ENCODE measurements at regions of chr19 and their contacts with region 1.

Region 1: GRCh38 chr19:45670670-45671453 is 2.8 kb downstream of the GIPR start:
- DNase-seq: peak; percentile 83
- H3K4me3 Mint-ChIP-seq: peak overlapping the region; percentile 57
- H3K27ac Mint-ChIP-seq: no peak overlapping the region
- H3K4me1 Mint-ChIP-seq: peaks cover 33% of the 10 kb centered on the region
- H3K27me3 Mint-ChIP-seq: peaks cover 17% of the 10 kb centered on the region

Region 2: DNA sequence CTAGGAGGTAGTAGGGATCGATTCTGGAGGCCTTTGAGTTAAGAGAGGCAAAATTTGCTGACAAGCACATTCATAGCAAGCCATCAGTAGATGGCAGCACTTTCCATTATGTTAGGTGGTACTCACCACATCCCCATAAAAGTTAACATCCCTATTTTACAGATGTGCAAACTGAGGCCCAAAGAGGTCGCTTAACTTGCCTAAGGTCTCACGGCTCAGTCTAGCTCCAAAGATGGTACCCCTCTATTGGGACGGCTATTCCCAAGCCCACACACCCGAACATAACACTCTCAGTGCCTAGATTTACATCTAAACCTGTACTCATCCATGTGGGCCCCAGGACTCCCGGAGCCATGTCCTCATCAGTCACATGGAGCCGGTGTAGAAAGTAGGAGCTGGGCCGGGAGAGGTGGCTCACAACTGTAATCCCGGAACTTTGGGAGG is 224.5 kb before region 1 on chr19:
- CTCF ChIA-PET with region 1: no interaction called
- POLR2A ChIA-PET with region 1: no interaction called
- intact Hi-C with region 1: loop called (anchors 1 kb)
- DNase-seq: no peak
- H3K4me3 Mint-ChIP-seq: no peak overlapping the region
- H3K27ac Mint-ChIP-seq: no peak overlapping the region
- H3K4me1 Mint-ChIP-seq: peaks cover 54% of the 10 kb centered on the region
- H3K27me3 Mint-ChIP-seq: no peaks in the 10 kb centered on the region

Region 3: GRCh38 chr19:45591004-45591637 is 79.7 kb before region 1 on chr19:
- CTCF ChIA-PET with region 1: no interaction called
- POLR2A ChIA-PET with region 1: no interaction called
- intact Hi-C with region 1: no loop called
- DNase-seq: peak; percentile 73
- H3K4me3 Mint-ChIP-seq: no peak overlapping the region
- H3K27ac Mint-ChIP-seq: no peak overlapping the region
- H3K4me1 Mint-ChIP-seq: peaks cover 10% of the 10 kb centered on the region
- H3K27me3 Mint-ChIP-seq: peaks cover 27% of the 10 kb centered on the region

Region 4: GRCh38 chr19:45681391-45682015 is 10.6 kb after region 1 on chr19:
- CTCF ChIA-PET with region 1: interaction called, 14 read pairs
- POLR2A ChIA-PET with region 1: interaction called, 5 read pairs
- intact Hi-C with region 1: loop called (anchors 1 kb)
- DNase-seq: peak; percentile 93
- H3K4me3 Mint-ChIP-seq: peak overlapping the region; percentile 73
- H3K27ac Mint-ChIP-seq: no peak overlapping the region
- H3K4me1 Mint-ChIP-seq: peaks cover 19% of the 10 kb centered on the region
- H3K27me3 Mint-ChIP-seq: no peaks in the 10 kb centered on the region

Region 5: GRCh38 chr19:45770192-45771101 is 99.6 kb after region 1 on chr19:
- CTCF ChIA-PET with region 1: no interaction called
- POLR2A ChIA-PET with region 1: no interaction called
- intact Hi-C with region 1: no loop called
- DNase-seq: peak; percentile 92
- H3K4me3 Mint-ChIP-seq: peak overlapping the region; percentile 78
- H3K27ac Mint-ChIP-seq: peak overlapping the region; percentile 28
- H3K4me1 Mint-ChIP-seq: peaks cover 10% of the 10 kb centered on the region
- H3K27me3 Mint-ChIP-seq: peaks cover 9% of the 10 kb centered on the region

Measured in activated CD4-positive, alpha-beta memory T cell treated with anti-CD3 and anti-CD28 coated beads for 36 hours (primary cell).